ENCODE measurements at regions of chr10 and their contacts with region 1.

Region 1: GRCh38 chr10:93702211-93703001 is at the start of gene FRA10AC1:
- DNase-seq: no peak
- ATAC-seq: peak; percentile 91
- H3K4me3 ChIP-seq: peak within 1 kb of the TSS; percentile 87
- H3K27ac ChIP-seq: peak within 1 kb of the TSS; percentile 76
- H3K4me1 ChIP-seq: no peaks in the 10 kb centered on the region
- H3K27me3 ChIP-seq: no peaks in the 10 kb centered on the region
- CTCF ChIP-seq: peak; percentile 50 to 55 (median 54); a peak in 5 of 6 replicates
- EP300 ChIP-seq: peak; percentile 39 to 71; a peak in 2 of 4 replicates
- POLR2A ChIP-seq: peak; percentile 86
- RAD21 ChIP-seq: peak; percentile 52
- polyA plus RNA-seq, gene FRA10AC1: 5.3 to 10.8 TPM

Region 2: DNA sequence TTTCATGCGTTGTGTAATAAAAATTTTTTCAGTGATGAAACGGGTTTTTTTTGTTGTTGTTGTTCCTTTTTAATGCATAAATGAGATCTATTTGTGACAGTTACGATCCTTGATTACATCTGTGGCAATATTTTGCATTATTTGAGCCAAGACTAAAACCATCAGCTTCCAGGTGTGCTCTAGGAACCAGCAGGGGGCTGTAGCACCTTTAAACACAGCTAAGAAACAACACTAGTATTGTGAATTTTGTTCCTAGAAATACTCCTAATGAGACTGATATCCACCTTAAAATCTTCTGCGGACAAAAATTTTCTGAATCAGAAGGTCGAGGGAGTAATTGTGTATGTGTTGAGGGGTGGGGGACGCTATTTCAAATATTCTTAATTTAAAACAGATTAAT is 1845.8 kb before region 1 on chr10:
- CTCF ChIA-PET with region 1: no interaction called
- POLR2A ChIA-PET with region 1: no interaction called
- RAD21 ChIA-PET with region 1: no interaction called
- SMC1A ChIA-PET with region 1: no interaction called
- in situ Hi-C with region 1: no loop called
- intact Hi-C with region 1: no loop called
- DNase-seq: no peak
- ATAC-seq: no peak
- H3K4me3 ChIP-seq: no peak overlapping the region
- H3K27ac ChIP-seq: no peak overlapping the region
- H3K4me1 ChIP-seq: no peaks in the 10 kb centered on the region
- H3K27me3 ChIP-seq: no peaks in the 10 kb centered on the region
- CTCF ChIP-seq: peak; percentile 24 to 33 (median 29); a peak in 2 of 6 replicates
- EP300 ChIP-seq: no peak
- POLR2A ChIP-seq: no peak
- RAD21 ChIP-seq: peak; percentile 26; the same call in 1 of the 2 replicates

Region 3: DNA sequence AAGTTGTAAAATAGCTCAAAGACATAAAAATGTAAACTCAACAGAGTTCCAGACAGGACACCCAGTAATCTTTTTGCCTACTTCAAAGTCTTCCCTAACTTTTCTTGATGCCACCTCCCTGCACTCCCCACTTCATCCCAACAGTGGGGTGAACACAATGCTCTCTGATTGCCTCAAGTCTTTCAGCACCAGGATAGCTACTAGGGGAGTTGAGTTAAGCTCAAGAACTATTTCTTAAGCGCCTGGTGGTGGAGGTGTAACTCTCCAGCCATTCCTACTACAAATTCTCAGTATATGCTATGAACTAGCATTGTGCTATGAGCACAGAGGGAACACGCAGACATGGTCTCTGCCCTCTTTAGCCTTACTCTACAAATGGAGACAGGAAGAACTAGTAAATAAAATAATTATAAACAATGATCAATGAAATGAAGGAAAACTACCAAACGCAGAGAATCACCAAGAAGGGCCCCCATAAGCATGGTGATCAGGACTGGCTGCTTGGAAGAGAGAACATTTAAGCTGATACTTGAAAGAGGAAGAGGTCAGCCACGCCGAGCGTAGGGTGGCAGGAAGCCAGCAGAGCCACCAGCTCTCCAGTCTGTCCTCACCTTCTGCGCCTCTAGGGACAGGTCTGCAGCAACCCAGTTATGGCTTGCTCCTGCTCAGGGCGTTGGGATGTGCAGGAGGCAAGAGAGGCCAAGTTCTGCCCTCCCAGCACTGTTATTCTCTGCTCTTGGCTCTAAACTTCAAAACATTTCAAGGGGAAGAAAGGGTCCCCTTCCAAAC is 16.7 kb after region 1 on chr10:
- CTCF ChIA-PET with region 1: interaction called, 19 read pairs
- POLR2A ChIA-PET with region 1: interaction called, 3 read pairs
- RAD21 ChIA-PET with region 1: interaction called, 18 read pairs
- SMC1A ChIA-PET with region 1: interaction called, 24 read pairs
- in situ Hi-C with region 1: no loop called
- intact Hi-C with region 1: no loop called
- DNase-seq: no peak
- ATAC-seq: peak; percentile 67
- H3K4me3 ChIP-seq: no peak overlapping the region
- H3K27ac ChIP-seq: no peak overlapping the region
- H3K4me1 ChIP-seq: peaks cover 30% of the 10 kb centered on the region
- H3K27me3 ChIP-seq: no peaks in the 10 kb centered on the region
- CTCF ChIP-seq: no peak
- EP300 ChIP-seq: no peak
- POLR2A ChIP-seq: no peak
- RAD21 ChIP-seq: no peak

Region 4: GRCh38 chr10:93746844-93747284 is 44.5 kb after region 1 on chr10:
- CTCF ChIA-PET with region 1: interaction called, 9 read pairs
- POLR2A ChIA-PET with region 1: interaction called, 3 read pairs
- RAD21 ChIA-PET with region 1: interaction called, 6 read pairs
- SMC1A ChIA-PET with region 1: interaction called, 5 read pairs
- in situ Hi-C with region 1: no loop called
- intact Hi-C with region 1: loop called (anchors 5 kb)
- DNase-seq: no peak
- ATAC-seq: peak; percentile 55
- H3K4me3 ChIP-seq: no peak overlapping the region
- H3K27ac ChIP-seq: no peak overlapping the region
- H3K4me1 ChIP-seq: no peaks in the 10 kb centered on the region; the same call in none of the 2 replicates
- H3K27me3 ChIP-seq: no peaks in the 10 kb centered on the region
- CTCF ChIP-seq: peak; percentile 26 to 44 (median 41); a peak in 4 of 6 replicates
- EP300 ChIP-seq: no peak
- POLR2A ChIP-seq: no peak
- RAD21 ChIP-seq: 0 out of 2 replicates have a peak, but pooled peaks have one; percentile 5

Region 5: GRCh38 chr10:93757136-93757535 is 54.7 kb after region 1 on chr10:
- CTCF ChIA-PET with region 1: interaction called, 3 read pairs
- POLR2A ChIA-PET with region 1: interaction called, 3 read pairs
- RAD21 ChIA-PET with region 1: no interaction called
- SMC1A ChIA-PET with region 1: interaction called, 7 read pairs
- in situ Hi-C with region 1: no loop called
- intact Hi-C with region 1: loop called (anchors 5 kb)
- DNase-seq: no peak
- ATAC-seq: peak; percentile 26; the same call in 2 of the 3 replicates
- H3K4me3 ChIP-seq: no peak overlapping the region
- H3K27ac ChIP-seq: no peak overlapping the region
- H3K4me1 ChIP-seq: no peaks in the 10 kb centered on the region
- H3K27me3 ChIP-seq: peaks cover 0 to 8% of the 10 kb centered on the region in 2 experiments; a peak in 2 of 4 replicates
- CTCF ChIP-seq: peak in 1 of 3 experiments; percentile 16; a peak in 1 of 6 replicates
- EP300 ChIP-seq: no peak
- POLR2A ChIP-seq: no peak
- RAD21 ChIP-seq: no peak

Measured in GM12878 (cell line).